Motor neuron (in vitro differentiated cells): ENCODE measurements at regions of chr18 and their contacts with region 1.

Region 1: GRCh38 chr18:78242254-78242643 is 737.4 kb upstream of the SALL3 start:
- ATAC-seq: no peak
- H3K4me3 ChIP-seq: no peak overlapping the region
- H3K27ac ChIP-seq: no peak overlapping the region
- H3K4me1 ChIP-seq: peaks cover 2 to 34% of the 10 kb centered on the region in 2 donors

Region 2: GRCh38 chr18:78330761-78331160 is 88.5 kb after region 1 on chr18:
- in situ Hi-C with region 1: loop called in 1 of 9 experiments (anchors 25 kb)
- ATAC-seq: no peak
- H3K4me3 ChIP-seq: no peak overlapping the region
- H3K27ac ChIP-seq: no peak overlapping the region
- H3K4me1 ChIP-seq: no peaks in the 10 kb centered on the region